ENCODE measurements at regions of chr9 and their contacts with region 1.

Region 1: DNA sequence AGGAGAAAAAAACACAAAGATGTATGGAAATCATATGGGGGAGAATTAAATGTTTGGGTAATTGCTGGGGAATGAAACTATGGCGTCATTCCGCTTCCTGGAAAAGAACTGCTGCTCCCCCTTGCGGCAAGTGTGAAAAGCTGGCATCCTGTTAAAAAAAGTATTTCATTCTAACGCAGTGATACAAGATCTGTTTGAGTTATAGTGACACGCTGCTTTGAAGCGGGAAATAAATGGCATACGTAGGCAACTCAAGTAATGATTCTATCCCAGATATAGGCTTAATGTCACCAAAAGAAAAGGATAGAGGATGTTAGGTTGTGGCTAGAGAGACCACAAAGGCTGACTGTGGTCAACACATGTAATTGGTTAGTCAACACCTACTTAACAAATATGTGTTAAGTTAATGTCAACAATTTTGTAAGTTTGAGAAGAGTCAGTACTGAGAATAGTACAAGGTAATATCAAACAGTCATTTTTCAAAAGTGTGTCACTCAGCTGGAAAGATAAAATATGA is 70.2 kb upstream of the ALDH1A1 start:
- DNase-seq: peak; percentile 36 to 62 (median 44)
- H3K4me3 ChIP-seq: no peak overlapping the region
- H3K4me3 Mint-ChIP-seq: no peak overlapping the region
- H3K27ac ChIP-seq: no peak overlapping the region
- H3K27ac Mint-ChIP-seq: no peak overlapping the region
- H3K4me1 ChIP-seq: no peaks in the 10 kb centered on the region
- H3K4me1 Mint-ChIP-seq: peaks cover 6% of the 10 kb centered on the region
- H3K27me3 ChIP-seq: no peaks in the 10 kb centered on the region
- H3K27me3 Mint-ChIP-seq: no peaks in the 10 kb centered on the region
- CTCF ChIP-seq: peak; percentile 94

Region 2: GRCh38 chr9:72726947-72727346 is 296.1 kb before region 1 on chr9:
- intact Hi-C with region 1: no loop called
- DNase-seq: no peak
- H3K4me3 ChIP-seq: no peak overlapping the region
- H3K4me3 Mint-ChIP-seq: no peak overlapping the region
- H3K27ac ChIP-seq: no peak overlapping the region
- H3K27ac Mint-ChIP-seq: no peak overlapping the region
- H3K4me1 ChIP-seq: no peaks in the 10 kb centered on the region
- H3K4me1 Mint-ChIP-seq: peaks cover 2% of the 10 kb centered on the region
- H3K27me3 ChIP-seq: peaks cover 3 to 5% of the 10 kb centered on the region in 2 donors
- H3K27me3 Mint-ChIP-seq: peaks cover 4 to 8% (median 4%) of the 10 kb centered on the region in 3 donors
- CTCF ChIP-seq: no peak

Region 3: GRCh38 chr9:72856972-72857623 is 166.0 kb before region 1 on chr9:
- intact Hi-C with region 1: loop called in 1 of 2 experiments (anchors 10 kb)
- DNase-seq: peak; percentile 29 to 46 (median 40)
- H3K4me3 ChIP-seq: no peak overlapping the region
- H3K4me3 Mint-ChIP-seq: no peak overlapping the region
- H3K27ac ChIP-seq: no peak overlapping the region
- H3K27ac Mint-ChIP-seq: no peak overlapping the region
- H3K4me1 ChIP-seq: no peaks in the 10 kb centered on the region
- H3K4me1 Mint-ChIP-seq: peaks cover 4% of the 10 kb centered on the region
- H3K27me3 ChIP-seq: no peaks in the 10 kb centered on the region
- H3K27me3 Mint-ChIP-seq: peaks cover 0 to 4% (median 0%) of the 10 kb centered on the region in 3 donors
- CTCF ChIP-seq: peak; percentile 56

Region 4: GRCh38 chr9:72983512-72984225 is 39.4 kb before region 1 on chr9:
- intact Hi-C with region 1: no loop called
- DNase-seq: no peak
- H3K4me3 ChIP-seq: no peak overlapping the region
- H3K4me3 Mint-ChIP-seq: no peak overlapping the region
- H3K27ac ChIP-seq: no peak overlapping the region
- H3K27ac Mint-ChIP-seq: no peak overlapping the region
- H3K4me1 ChIP-seq: no peaks in the 10 kb centered on the region
- H3K4me1 Mint-ChIP-seq: peaks cover 4% of the 10 kb centered on the region
- H3K27me3 ChIP-seq: no peaks in the 10 kb centered on the region
- H3K27me3 Mint-ChIP-seq: peaks cover 0 to 2% (median 1%) of the 10 kb centered on the region in 3 donors
- CTCF ChIP-seq: no peak